CD8-positive, alpha-beta T cell (primary cell): ENCODE measurements at regions of chr5 and their contacts with region 1.

Region 1: DNA sequence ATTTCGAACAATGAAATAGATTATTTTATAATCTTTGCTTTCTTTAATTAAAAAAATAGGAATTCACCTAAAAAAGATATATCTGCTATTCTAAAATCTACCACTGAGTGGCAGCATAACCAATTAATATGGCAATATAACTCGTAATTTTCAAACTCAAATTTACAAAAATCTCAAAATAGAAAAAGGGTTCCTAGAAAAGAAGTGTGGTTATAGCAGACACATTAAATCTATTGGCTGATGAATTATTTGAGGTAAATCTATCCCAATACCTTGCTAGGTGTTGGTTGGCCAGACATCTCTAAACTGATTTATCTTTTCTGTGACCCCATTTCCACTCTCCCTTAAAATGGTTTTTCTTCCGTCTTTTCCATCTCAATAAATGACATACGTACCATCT is 30.2 kb upstream of the NRG2 start:
- DNase-seq: peak in 2 of 9 experiments; percentile 56 to 62
- ATAC-seq: no peak
- H3K4me3 ChIP-seq: no peak overlapping the region
- H3K4me3 Mint-ChIP-seq: no peak overlapping the region
- H3K27ac ChIP-seq: no peak overlapping the region
- H3K27ac Mint-ChIP-seq: no peak overlapping the region
- H3K4me1 ChIP-seq: no peaks in the 10 kb centered on the region
- H3K4me1 Mint-ChIP-seq: no peaks in the 10 kb centered on the region
- H3K27me3 ChIP-seq: peaks cover 0 to 12% of the 10 kb centered on the region in 2 experiments
- H3K27me3 Mint-ChIP-seq: peaks cover 28% of the 10 kb centered on the region
- CTCF ChIP-seq: peak; percentile 94

Region 2: GRCh38 chr5:140131967-140132409 is 58.7 kb after region 1 on chr5:
- CTCF ChIA-PET with region 1: interaction called, 43 read pairs
- POLR2A ChIA-PET with region 1: no interaction called
- intact Hi-C with region 1: no loop called
- DNase-seq: peak in 1 of 9 experiments; percentile 30
- ATAC-seq: peak; percentile 55
- H3K4me3 ChIP-seq: no peak overlapping the region
- H3K4me3 Mint-ChIP-seq: no peak overlapping the region
- H3K27ac ChIP-seq: no peak overlapping the region
- H3K27ac Mint-ChIP-seq: no peak overlapping the region
- H3K4me1 ChIP-seq: peaks cover 21% of the 10 kb centered on the region
- H3K4me1 Mint-ChIP-seq: peaks cover 50% of the 10 kb centered on the region
- H3K27me3 ChIP-seq: no peaks in the 10 kb centered on the region
- H3K27me3 Mint-ChIP-seq: no peaks in the 10 kb centered on the region
- CTCF ChIP-seq: no peak

Region 3: GRCh38 chr5:140157032-140157803 is 83.9 kb after region 1 on chr5:
- CTCF ChIA-PET with region 1: interaction called, 167 read pairs
- POLR2A ChIA-PET with region 1: no interaction called
- intact Hi-C with region 1: loop called (anchors 1 kb)
- DNase-seq: peak; percentile 74 to 91 (median 87)
- ATAC-seq: peak; percentile 100
- H3K4me3 ChIP-seq: no peak overlapping the region
- H3K4me3 Mint-ChIP-seq: peak overlapping the region; percentile 46
- H3K27ac ChIP-seq: no peak overlapping the region
- H3K27ac Mint-ChIP-seq: no peak overlapping the region
- H3K4me1 ChIP-seq: peaks cover 4% of the 10 kb centered on the region
- H3K4me1 Mint-ChIP-seq: peaks cover 6% of the 10 kb centered on the region
- H3K27me3 ChIP-seq: no peaks in the 10 kb centered on the region
- H3K27me3 Mint-ChIP-seq: peaks cover under 1% of the 10 kb centered on the region
- CTCF ChIP-seq: peak; percentile 81

Region 4: GRCh38 chr5:140564196-140565023 is 491.1 kb after region 1 on chr5 and contains the starts of genes APBB3 and SLC35A4:
- CTCF ChIA-PET with region 1: no interaction called
- POLR2A ChIA-PET with region 1: no interaction called
- intact Hi-C with region 1: no loop called
- DNase-seq: peak; percentile 92 to 100 (median 95)
- ATAC-seq: peak; percentile 88
- H3K4me3 ChIP-seq: peak within 1 kb of the TSS; percentile 52 to 79
- H3K4me3 Mint-ChIP-seq: peak within 1 kb of the TSS; percentile 88
- H3K27ac ChIP-seq: peak within 1 kb of the TSS; percentile 73 to 92
- H3K27ac Mint-ChIP-seq: peak within 1 kb of the TSS; percentile 94
- H3K4me1 ChIP-seq: peaks cover 30% of the 10 kb centered on the region
- H3K4me1 Mint-ChIP-seq: peaks cover 62% of the 10 kb centered on the region
- H3K27me3 ChIP-seq: no peaks in the 10 kb centered on the region
- H3K27me3 Mint-ChIP-seq: no peaks in the 10 kb centered on the region
- CTCF ChIP-seq: no peak
- total RNA-seq, gene APBB3: 51.0 to 51.7 TPM
- total RNA-seq, gene SLC35A4: 14.8 to 19.4 TPM